ENCODE measurements at regions of chr10 and their contacts with region 1.

Region 1: GRCh38 chr10:69179743-69180524 is at the start of gene SUPV3L1:
- DNase-seq: peak; percentile 98
- ATAC-seq: peak; percentile 90
- H3K4me3 ChIP-seq: peak within 1 kb of the TSS; percentile 79 to 93 (median 87)
- H3K27ac ChIP-seq: peak within 1 kb of the TSS; percentile 98
- H3K4me1 ChIP-seq: peaks cover 35% of the 10 kb centered on the region
- H3K27me3 ChIP-seq: no peaks in the 10 kb centered on the region; a peak in 1 of 5 replicates
- CTCF ChIP-seq: no peak
- EP300 ChIP-seq: no peak
- POLR2A ChIP-seq: peak; percentile 83 to 94
- RAD21 ChIP-seq: 0 out of 2 replicates have a peak, but pooled peaks have one; percentile 9
- total RNA-seq, gene SUPV3L1: 45.7 and 57.0 TPM in 2 replicates

Region 2: DNA sequence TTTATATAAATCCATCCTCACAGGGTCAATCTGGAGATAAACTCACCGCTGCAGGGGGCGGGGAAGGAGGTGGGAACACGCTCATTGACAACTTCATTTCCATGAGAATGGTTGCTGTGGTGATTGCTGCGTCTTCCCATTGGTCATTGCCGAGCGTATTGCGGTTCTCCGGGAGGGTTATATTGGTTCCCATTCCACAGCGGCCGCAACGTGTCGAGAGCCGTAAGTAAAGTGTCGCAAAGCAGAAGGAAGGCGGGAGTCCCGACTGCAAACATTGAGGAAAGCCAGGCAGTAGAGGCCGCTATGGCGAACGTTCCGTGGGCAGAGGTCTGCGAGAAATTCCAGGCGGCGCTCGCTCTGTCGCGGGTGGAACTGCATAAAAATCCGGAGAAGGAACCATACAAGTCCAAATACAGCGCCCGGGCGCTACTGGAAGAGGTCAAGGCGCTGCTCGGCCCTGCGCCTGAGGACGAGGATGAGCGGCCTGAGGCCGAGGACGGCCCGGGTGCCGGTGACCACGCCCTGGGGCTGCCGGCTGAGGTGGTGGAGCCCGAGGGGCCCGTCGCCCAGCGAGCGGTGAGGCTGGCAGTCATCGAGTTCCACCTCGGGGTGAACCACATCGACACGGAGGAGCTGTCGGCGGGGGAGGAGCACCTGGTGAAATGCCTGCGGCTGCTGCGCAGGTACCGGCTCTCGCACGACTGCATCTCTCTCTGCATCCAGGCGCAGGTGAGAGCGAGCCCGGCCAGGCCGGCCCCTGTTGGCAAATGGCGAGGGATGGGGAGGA is 191.2 kb before region 1 on chr10 and contains the start of gene KIFBP:
- CTCF ChIA-PET with region 1: no interaction called
- POLR2A ChIA-PET with region 1: no interaction called
- in situ Hi-C with region 1: no loop called
- intact Hi-C with region 1: loop called (anchors 5 kb)
- DNase-seq: peak; percentile 95
- ATAC-seq: peak; percentile 90
- H3K4me3 ChIP-seq: peak within 1 kb of the TSS; percentile 73 to 91 (median 79)
- H3K27ac ChIP-seq: peak within 1 kb of the TSS; percentile 67
- H3K4me1 ChIP-seq: peaks cover 38% of the 10 kb centered on the region
- H3K27me3 ChIP-seq: no peaks in the 10 kb centered on the region; a peak in 1 of 5 replicates
- CTCF ChIP-seq: peak; percentile 75
- EP300 ChIP-seq: 0 out of 4 replicates have a peak, but pooled peaks of 1 of the 2 experiments have one; percentile 6
- POLR2A ChIP-seq: peak; percentile 81 to 91
- RAD21 ChIP-seq: no peak
- total RNA-seq, gene KIFBP: 21.9 and 29.9 TPM in 2 replicates

Region 3: DNA sequence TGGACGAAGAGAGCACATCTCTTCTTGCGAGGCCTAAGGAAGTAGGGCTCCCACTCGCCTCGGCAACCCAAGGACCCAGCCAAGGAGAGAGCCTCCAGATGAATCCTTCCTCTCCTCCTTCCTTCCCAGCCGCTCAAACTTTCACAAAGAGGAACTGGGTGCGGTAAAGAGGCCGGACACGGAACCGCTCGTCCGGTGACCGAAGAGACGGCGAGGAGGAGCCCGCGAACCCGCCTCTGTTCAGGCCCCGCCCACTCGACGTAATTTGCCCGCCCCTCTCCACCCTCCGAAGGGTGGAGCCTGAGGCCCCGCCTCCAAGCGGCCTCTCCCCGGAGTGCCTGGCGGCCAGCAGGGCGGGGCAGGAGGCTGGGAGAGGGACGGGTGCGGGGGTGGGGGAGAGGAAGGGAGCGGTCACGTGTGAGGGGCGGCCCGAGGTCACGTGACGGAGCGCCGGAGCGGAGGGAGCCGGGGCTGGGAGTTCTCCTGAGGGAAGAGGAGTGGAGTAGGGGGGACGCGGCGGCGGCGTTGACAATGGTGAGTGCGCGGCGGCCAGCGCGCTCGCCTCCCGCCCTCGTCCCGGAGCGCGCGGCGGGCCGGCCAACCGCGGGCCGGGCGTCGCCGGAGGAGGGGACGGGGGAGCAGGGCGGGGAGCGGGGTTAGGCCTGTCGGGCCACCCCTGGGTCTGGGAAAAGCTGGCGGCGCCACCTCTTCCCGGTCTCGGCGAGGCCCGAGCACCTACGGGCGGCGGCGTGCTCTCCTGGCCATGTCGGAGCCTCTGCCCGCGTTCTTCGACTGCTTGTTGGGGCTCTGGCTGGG is 56.0 kb before region 1 on chr10 and contains the start of gene VPS26A:
- CTCF ChIA-PET with region 1: no interaction called
- POLR2A ChIA-PET with region 1: no interaction called
- in situ Hi-C with region 1: no loop called
- intact Hi-C with region 1: loop called (anchors 10 kb)
- DNase-seq: peak; percentile 94
- ATAC-seq: peak; percentile 87
- H3K4me3 ChIP-seq: peak within 1 kb of the TSS; percentile 85 to 96 (median 89)
- H3K27ac ChIP-seq: peak within 1 kb of the TSS; percentile 89
- H3K4me1 ChIP-seq: peaks cover 29% of the 10 kb centered on the region
- H3K27me3 ChIP-seq: no peaks in the 10 kb centered on the region; a peak in 1 of 5 replicates
- CTCF ChIP-seq: peak; percentile 60
- EP300 ChIP-seq: no peak
- POLR2A ChIP-seq: peak; percentile 80 to 85
- RAD21 ChIP-seq: peak; percentile 55; the same call in 1 of the 2 replicates
- total RNA-seq, gene VPS26A: 32.6 and 56.7 TPM in 2 replicates

Region 4: DNA sequence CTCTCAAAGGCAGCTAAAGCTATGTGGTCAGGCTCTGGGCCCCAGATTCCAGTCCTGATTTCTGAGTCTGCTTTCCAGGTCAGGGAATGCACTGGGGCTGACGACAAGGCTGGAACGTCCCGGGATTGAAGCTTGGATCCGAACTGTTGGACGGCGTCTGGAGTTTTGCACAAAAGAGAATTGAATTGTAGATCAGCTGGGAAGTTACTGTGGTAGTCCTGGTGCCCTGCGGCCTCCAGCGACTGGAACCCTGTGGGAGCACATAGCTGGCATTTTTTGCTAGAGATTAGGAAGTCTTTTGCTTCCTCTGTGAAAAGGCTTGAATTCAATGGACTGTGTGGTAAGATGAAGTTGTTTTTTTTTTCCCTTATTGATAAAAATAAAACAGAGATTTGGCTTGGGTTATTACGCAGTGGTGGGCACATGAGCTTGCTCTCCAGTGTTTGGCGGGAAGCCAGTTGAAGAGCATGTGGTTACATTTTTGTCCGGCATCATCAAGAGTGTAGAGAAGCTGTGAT is 98.6 kb after region 1 on chr10 and contains the start of gene HK1:
- CTCF ChIA-PET with region 1: no interaction called
- POLR2A ChIA-PET with region 1: no interaction called
- in situ Hi-C with region 1: no loop called
- intact Hi-C with region 1: no loop called
- DNase-seq: no peak
- ATAC-seq: no peak
- H3K4me3 ChIP-seq: no peak within 1 kb of the TSS
- H3K27ac ChIP-seq: no peak within 1 kb of the TSS
- H3K4me1 ChIP-seq: peaks cover 11% of the 10 kb centered on the region
- H3K27me3 ChIP-seq: no peaks in the 10 kb centered on the region
- CTCF ChIP-seq: no peak
- EP300 ChIP-seq: no peak
- POLR2A ChIP-seq: no peak
- RAD21 ChIP-seq: no peak
- total RNA-seq, gene HK1: 0.21 and 0.29 TPM in 2 replicates